Activated CD8-positive, alpha-beta T cell treated with anti-CD3 and anti-CD28 coated beads, Interleukin-2, amount 10 ng/mL, durations not matched to agents 7 days and 5 days (primary cell): ENCODE measurements at regions of chr10 and their contacts with region 1.

Region 1: DNA sequence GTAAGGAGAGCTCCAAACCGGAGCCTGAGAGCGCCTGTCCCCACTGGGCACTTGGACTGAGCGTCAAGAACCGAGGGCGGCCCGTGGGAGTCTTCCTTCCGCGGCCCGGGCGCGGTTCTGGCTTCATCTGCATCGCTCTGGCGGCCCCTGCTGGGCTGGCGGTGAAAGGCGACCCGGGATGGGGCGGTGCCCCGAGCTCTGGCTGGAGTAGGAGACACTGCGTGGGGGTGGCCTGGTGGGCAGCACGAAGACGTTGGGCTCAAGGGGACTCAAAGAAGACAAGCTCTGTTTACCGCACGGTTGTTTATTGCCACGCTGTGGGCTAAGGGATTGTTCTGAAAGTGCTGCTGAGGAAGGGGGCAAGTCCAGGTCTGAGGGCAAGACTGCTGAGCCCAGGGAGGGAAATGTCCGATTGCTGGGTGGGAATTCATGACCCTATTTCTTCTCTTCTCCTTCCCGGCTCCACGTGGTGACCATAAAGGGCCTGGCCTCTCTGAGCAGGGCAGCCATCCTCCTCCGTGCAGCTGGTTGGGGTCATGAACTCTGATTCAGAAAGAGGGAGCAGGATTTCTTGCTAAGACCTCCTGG is 29.8 kb downstream of the PLAU start:
- DNase-seq: peak; percentile 89
- ATAC-seq: peak; percentile 100
- H3K4me3 Mint-ChIP-seq: peak overlapping the region; percentile 23
- H3K27ac Mint-ChIP-seq: peak overlapping the region; percentile 51
- H3K4me1 Mint-ChIP-seq: peaks cover 21% of the 10 kb centered on the region
- H3K27me3 Mint-ChIP-seq: peaks cover 18% of the 10 kb centered on the region

Region 2: DNA sequence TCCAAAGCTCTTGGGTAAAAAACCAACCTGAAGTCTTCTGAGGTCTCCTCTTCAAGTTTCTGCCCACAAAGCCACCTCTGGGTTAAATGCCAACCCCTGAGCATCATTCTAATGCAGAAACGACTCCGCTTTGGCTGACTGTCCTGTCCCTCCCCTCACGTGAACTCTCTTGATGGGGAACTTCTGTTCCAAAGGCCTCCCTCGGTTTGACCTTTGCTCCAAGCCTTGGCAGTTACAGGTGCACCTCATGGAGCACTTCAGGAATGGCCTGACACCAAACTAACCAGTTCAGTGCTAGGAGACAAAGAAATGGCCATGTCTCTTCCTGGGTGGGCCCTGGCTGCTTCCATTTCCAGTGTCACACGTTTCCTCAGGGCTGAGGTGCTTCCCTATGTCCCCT is 86.4 kb before region 1 on chr10:
- CTCF ChIA-PET with region 1: interaction called, 25 read pairs
- POLR2A ChIA-PET with region 1: interaction called, 3 read pairs
- DNase-seq: no peak
- ATAC-seq: no peak
- H3K4me3 Mint-ChIP-seq: no peak overlapping the region
- H3K27ac Mint-ChIP-seq: no peak overlapping the region
- H3K4me1 Mint-ChIP-seq: peaks cover 59% of the 10 kb centered on the region
- H3K27me3 Mint-ChIP-seq: no peaks in the 10 kb centered on the region

Region 3: GRCh38 chr10:73908853-73909538 is 31.7 kb before region 1 on chr10:
- CTCF ChIA-PET with region 1: interaction called, 21 read pairs
- POLR2A ChIA-PET with region 1: no interaction called
- DNase-seq: peak; percentile 72
- ATAC-seq: peak; percentile 40
- H3K4me3 Mint-ChIP-seq: peak overlapping the region; percentile 58
- H3K27ac Mint-ChIP-seq: peak overlapping the region; percentile 72
- H3K4me1 Mint-ChIP-seq: peaks cover 43% of the 10 kb centered on the region
- H3K27me3 Mint-ChIP-seq: peaks cover 35% of the 10 kb centered on the region

Region 4: GRCh38 chr10:73926152-73926764 is 14.5 kb before region 1 on chr10:
- CTCF ChIA-PET with region 1: interaction called, 31 read pairs
- POLR2A ChIA-PET with region 1: no interaction called
- DNase-seq: no peak
- ATAC-seq: no peak
- H3K4me3 Mint-ChIP-seq: no peak overlapping the region
- H3K27ac Mint-ChIP-seq: no peak overlapping the region
- H3K4me1 Mint-ChIP-seq: peaks cover 29% of the 10 kb centered on the region
- H3K27me3 Mint-ChIP-seq: peaks cover 47% of the 10 kb centered on the region

Region 5: DNA sequence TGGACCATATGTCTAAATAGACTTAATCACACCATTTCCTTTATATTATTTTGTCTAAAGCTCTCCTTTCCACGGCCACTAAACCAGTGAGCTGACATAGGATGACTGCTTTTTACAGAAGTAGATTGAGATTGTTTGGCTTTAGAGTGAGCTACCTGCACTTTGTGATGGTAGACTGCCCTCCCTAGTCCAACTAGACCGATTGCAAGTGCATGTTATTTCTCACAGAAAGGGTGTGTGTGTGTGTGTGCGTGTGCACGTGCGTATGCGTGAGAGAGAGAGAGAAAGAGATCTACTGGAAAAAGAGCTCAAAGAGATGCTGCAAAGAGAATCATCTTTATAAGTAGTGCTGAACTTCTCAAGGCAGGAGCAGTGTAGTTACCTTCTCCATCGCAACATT is 117.9 kb after region 1 on chr10:
- CTCF ChIA-PET with region 1: interaction called, 10 read pairs
- POLR2A ChIA-PET with region 1: no interaction called
- DNase-seq: peak; percentile 42
- ATAC-seq: peak; percentile 43
- H3K4me3 Mint-ChIP-seq: no peak overlapping the region
- H3K27ac Mint-ChIP-seq: peak overlapping the region; percentile 51
- H3K4me1 Mint-ChIP-seq: peaks cover 42% of the 10 kb centered on the region
- H3K27me3 Mint-ChIP-seq: no peaks in the 10 kb centered on the region

Region 6: GRCh38 chr10:74103560-74104248 is 163.0 kb after region 1 on chr10:
- CTCF ChIA-PET with region 1: interaction called, 22 read pairs
- POLR2A ChIA-PET with region 1: no interaction called
- DNase-seq: no peak
- ATAC-seq: no peak
- H3K4me3 Mint-ChIP-seq: no peak overlapping the region
- H3K27ac Mint-ChIP-seq: no peak overlapping the region
- H3K4me1 Mint-ChIP-seq: peaks cover 4% of the 10 kb centered on the region
- H3K27me3 Mint-ChIP-seq: no peaks in the 10 kb centered on the region

Region 7: GRCh38 chr10:74151056-74151878 is 210.5 kb after region 1 on chr10 and contains the start of gene ADK:
- CTCF ChIA-PET with region 1: no interaction called
- POLR2A ChIA-PET with region 1: no interaction called
- DNase-seq: peak; percentile 100
- ATAC-seq: peak; percentile 95
- H3K4me3 Mint-ChIP-seq: no peak within 1 kb of the TSS
- H3K27ac Mint-ChIP-seq: no peak within 1 kb of the TSS
- H3K4me1 Mint-ChIP-seq: peaks cover 24% of the 10 kb centered on the region
- H3K27me3 Mint-ChIP-seq: no peaks in the 10 kb centered on the region
- total RNA-seq, gene ADK: 40.2 to 42.1 TPM

Region 8: GRCh38 chr10:74186678-74187077 is 245.9 kb after region 1 on chr10:
- CTCF ChIA-PET with region 1: no interaction called
- POLR2A ChIA-PET with region 1: no interaction called
- DNase-seq: no peak
- ATAC-seq: no peak
- H3K4me3 Mint-ChIP-seq: no peak overlapping the region
- H3K27ac Mint-ChIP-seq: no peak overlapping the region
- H3K4me1 Mint-ChIP-seq: peaks cover 33% of the 10 kb centered on the region
- H3K27me3 Mint-ChIP-seq: no peaks in the 10 kb centered on the region